H1 (cell line): ENCODE measurements at regions of chr3 and their contacts with region 1.

Region 1: DNA sequence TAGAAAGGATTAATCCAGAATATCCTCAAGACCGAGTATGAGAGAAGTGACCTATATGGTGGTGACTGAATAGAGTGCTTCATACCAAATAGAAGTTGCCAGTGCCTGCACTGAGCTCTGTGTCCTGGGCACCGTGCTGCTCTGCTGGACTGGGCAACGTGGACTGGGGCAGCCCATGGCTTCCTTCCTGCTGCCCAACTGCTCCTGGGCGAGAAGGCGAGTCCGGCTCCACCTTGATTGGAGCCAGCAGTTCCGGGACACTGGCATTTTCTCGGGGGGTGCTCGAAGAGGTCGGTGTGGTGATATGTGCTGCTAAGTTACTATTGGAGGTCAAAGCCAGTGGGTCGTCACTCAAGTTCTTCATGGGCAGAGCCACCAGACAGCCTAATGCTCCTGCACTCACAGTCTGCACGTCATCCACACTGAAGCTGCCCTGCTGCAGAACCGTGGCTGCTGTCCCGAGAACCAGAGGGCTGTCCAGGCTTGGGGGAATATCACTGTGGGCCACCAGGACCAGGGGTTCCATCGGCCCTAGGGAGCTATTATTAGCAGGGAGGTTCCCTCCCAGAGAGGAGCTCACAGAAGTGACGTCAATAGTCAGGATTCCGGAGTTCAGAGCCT is 14.1 kb downstream of the ZXDC start:
- DNase-seq: no peak
- H3K4me3 ChIP-seq: no peak overlapping the region
- H3K27ac ChIP-seq: no peak overlapping the region
- H3K4me1 ChIP-seq: no peaks in the 10 kb centered on the region
- H3K27me3 ChIP-seq: no peaks in the 10 kb centered on the region
- CTCF ChIP-seq: no peak
- EP300 ChIP-seq: no peak
- POLR2A ChIP-seq: no peak
- RAD21 ChIP-seq: no peak

Region 2: DNA sequence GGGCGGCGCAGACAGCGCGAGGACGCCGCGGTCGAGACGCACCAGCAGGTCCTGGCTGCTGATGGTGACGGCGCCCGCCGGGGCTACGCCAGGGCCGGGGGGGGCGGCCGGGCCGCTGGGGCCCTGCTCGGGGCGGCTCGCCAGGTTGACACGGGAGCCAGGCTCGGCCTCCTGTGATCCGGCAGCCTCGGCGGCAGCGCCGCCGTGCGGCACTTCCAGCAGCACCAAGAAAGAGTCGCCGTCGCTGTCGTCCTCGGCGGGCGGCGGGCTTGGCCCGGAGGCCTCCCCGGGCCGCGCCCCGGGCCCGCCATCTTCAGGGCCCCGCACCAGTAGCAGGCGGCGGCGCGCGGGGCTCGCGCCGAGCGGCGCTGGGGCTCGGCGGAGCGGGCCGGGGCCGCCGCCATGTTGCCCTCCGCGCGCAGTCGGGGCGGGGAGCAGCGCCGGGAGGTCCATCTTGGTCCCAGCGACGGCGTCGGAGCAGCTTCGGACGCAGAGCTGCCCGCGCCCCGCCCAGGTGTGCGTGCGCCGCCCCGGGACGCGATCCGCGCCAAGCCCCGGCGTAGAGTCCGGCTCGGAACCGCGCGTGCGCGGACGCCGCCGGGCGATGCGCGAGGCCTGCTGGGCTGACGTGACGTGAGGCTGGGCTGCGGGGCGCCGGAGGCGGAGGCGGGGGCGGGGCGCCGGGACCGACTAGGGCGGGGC is 14.0 kb after region 1 on chr3 and contains the start of gene ZXDC:
- CTCF ChIA-PET with region 1: interaction called, 7 read pairs
- POLR2A ChIA-PET with region 1: interaction called, 20 read pairs
- DNase-seq: peak; percentile 81 to 94
- H3K4me3 ChIP-seq: peak within 1 kb of the TSS; percentile 73 to 80 (median 74)
- H3K27ac ChIP-seq: peak within 1 kb of the TSS; percentile 80
- H3K4me1 ChIP-seq: peaks cover 9 to 22% (median 14%) of the 10 kb centered on the region in 4 experiments; a peak in 6 of 7 replicates
- H3K27me3 ChIP-seq: no peaks in the 10 kb centered on the region
- CTCF ChIP-seq: peak in 2 of 3 experiments; percentile 49; a peak in 3 of 4 replicates
- EP300 ChIP-seq: no peak
- POLR2A ChIP-seq: peak in 1 of 2 experiments; percentile 78; a peak in 1 of 3 replicates
- RAD21 ChIP-seq: peak; percentile 13 to 48; a peak in 3 of 4 replicates
- total RNA-seq, gene ZXDC: 23.0 and 24.3 TPM in 2 replicates